Activated CD4-positive, alpha-beta T cell treated with anti-CD3 and anti-CD28 coated beads, Interleukin-2, amount 10 ng/mL, durations not matched to agents 24 days and 14 days (primary cell): ENCODE measurements at regions of chr19 and their contacts with region 1.

Region 1: DNA sequence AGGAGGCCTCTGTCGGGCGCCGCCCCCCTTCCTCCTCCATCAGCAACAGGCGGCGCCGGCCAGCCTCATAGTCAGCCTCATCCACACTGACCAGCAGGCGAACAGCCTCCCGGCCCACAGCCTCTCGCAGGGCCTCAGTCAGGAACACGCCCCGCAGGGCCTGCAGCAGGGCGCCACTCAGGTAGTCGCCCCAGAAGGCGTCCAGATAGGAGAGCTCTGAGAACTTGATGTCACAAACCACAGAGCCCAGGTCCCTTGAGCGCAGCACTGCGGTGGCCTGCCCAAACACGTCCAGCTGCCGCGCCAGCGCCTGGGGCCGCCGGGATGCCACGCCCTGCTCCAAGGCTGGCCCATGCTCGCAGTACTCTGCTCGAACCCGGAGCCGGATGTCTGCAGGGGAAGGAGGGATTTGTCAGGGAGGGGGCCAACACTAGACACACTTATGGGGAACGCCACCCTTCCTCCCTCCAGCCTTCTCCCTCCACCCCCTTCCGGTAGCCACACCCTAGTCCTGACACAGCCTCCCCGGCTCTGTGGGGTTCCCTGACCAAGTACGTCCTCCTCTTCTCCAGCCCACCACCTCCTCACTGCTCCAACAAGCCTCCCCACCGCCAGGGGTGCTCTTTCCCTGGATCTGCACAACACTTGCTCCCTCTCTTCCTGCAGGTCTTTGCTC is 17.9 kb downstream of the DEDD2 start:
- DNase-seq: peak; percentile 93
- H3K4me3 Mint-ChIP-seq: peak overlapping the region; percentile 80
- H3K27ac Mint-ChIP-seq: peak overlapping the region; percentile 87
- H3K4me1 Mint-ChIP-seq: peaks cover 76% of the 10 kb centered on the region
- H3K27me3 Mint-ChIP-seq: no peaks in the 10 kb centered on the region

Region 2: GRCh38 chr19:42121656-42122069 is 77.9 kb before region 1 on chr19:
- intact Hi-C with region 1: loop called (anchors 1 kb)
- DNase-seq: peak; percentile 92
- H3K4me3 Mint-ChIP-seq: peak overlapping the region; percentile 80
- H3K27ac Mint-ChIP-seq: peak overlapping the region; percentile 95
- H3K4me1 Mint-ChIP-seq: peaks cover 52% of the 10 kb centered on the region
- H3K27me3 Mint-ChIP-seq: no peaks in the 10 kb centered on the region

Region 3: DNA sequence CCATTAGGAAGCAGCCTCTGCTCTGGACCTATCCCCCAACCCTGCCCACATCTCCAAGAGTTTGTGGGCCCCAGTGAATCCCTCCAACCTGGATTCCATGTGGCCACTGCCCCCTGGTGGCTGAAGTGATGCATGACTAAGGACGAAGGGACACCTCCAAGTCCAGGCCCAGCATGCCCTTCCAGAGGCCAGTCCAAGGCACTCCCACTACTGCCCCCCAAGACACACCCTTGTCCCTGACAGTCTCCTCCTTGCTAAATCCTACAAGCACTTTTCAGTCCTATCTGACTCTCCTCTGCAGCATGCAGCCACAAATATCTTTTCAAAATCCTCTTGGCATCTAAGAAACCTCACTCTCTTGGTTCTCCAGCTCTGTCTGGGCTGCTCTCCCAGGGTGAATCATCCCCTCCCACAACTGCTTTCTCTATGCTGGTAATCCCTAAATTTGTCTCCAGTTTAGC is 15.1 kb before region 1 on chr19:
- intact Hi-C with region 1: loop called (anchors 2 kb)
- DNase-seq: peak; percentile 91
- H3K4me3 Mint-ChIP-seq: peak overlapping the region; percentile 21
- H3K27ac Mint-ChIP-seq: peak overlapping the region; percentile 64
- H3K4me1 Mint-ChIP-seq: peaks cover 42% of the 10 kb centered on the region
- H3K27me3 Mint-ChIP-seq: peaks cover 14% of the 10 kb centered on the region

Region 4: DNA sequence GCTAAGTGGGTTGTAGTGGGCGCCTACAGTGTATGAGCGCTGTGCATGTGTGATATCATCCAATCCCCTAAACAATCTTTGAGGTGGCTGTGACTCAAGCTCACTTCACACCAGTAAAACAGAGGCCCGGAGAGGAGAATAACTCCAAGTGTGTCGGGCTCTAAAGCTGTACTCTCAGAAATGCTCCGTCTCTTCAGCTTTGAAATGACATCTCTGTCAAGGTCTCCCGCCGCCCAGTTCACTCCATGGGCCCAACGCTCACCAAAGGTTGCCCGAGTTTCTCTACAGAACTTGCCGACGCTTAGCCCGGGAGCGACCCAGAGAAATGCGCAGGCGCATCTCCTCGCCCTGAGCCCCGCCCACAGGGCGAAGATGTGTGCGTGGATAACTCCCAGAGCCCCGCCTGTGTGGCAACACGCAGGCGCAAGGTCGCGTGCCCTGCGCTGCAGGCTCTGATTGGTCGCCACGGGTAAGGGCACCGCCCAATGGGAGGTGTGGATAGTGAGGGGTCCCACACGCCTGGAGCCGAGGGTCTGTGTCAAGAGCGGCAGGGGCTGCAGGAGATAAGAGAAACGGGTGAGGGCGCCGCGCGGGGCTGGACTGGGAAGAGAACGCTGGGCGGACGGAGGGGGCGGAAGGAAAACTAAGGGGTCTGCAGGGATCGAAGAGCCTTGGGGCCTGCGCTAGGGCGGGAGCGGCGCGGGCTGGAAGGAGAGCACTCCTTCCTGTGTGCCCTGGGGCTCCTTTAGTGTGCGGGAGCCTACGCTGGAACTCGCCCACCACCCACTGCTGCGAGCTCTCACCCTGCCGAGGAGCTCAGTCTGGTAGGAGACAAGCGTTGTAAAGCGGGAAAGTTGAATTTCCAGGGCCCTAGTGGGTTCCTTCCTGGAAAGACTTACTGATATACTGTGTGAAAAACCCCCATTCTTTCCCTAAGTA is 20.5 kb after region 1 on chr19 and contains the start of gene ZNF526:
- intact Hi-C with region 1: loop called (anchors 1 kb)
- DNase-seq: peak; percentile 100
- H3K4me3 Mint-ChIP-seq: peak within 1 kb of the TSS; percentile 96
- H3K27ac Mint-ChIP-seq: peak within 1 kb of the TSS; percentile 94
- H3K4me1 Mint-ChIP-seq: peaks cover 50% of the 10 kb centered on the region
- H3K27me3 Mint-ChIP-seq: peaks cover 2% of the 10 kb centered on the region
- total RNA-seq, gene ZNF526: 19.0 and 20.1 TPM in 2 replicates

Region 5: GRCh38 chr19:42325273-42325895 is 125.8 kb after region 1 on chr19 and contains the start of gene MEGF8:
- intact Hi-C with region 1: loop called (anchors 1 kb)
- DNase-seq: peak; percentile 100
- H3K4me3 Mint-ChIP-seq: peak within 1 kb of the TSS; percentile 93
- H3K27ac Mint-ChIP-seq: peak within 1 kb of the TSS; percentile 87
- H3K4me1 Mint-ChIP-seq: peaks cover 16% of the 10 kb centered on the region
- H3K27me3 Mint-ChIP-seq: peaks cover 30% of the 10 kb centered on the region
- total RNA-seq, gene MEGF8: 8.4 and 9.1 TPM in 2 replicates